ENCODE measurements at regions of chr16 and their contacts with region 1.

Region 1: DNA sequence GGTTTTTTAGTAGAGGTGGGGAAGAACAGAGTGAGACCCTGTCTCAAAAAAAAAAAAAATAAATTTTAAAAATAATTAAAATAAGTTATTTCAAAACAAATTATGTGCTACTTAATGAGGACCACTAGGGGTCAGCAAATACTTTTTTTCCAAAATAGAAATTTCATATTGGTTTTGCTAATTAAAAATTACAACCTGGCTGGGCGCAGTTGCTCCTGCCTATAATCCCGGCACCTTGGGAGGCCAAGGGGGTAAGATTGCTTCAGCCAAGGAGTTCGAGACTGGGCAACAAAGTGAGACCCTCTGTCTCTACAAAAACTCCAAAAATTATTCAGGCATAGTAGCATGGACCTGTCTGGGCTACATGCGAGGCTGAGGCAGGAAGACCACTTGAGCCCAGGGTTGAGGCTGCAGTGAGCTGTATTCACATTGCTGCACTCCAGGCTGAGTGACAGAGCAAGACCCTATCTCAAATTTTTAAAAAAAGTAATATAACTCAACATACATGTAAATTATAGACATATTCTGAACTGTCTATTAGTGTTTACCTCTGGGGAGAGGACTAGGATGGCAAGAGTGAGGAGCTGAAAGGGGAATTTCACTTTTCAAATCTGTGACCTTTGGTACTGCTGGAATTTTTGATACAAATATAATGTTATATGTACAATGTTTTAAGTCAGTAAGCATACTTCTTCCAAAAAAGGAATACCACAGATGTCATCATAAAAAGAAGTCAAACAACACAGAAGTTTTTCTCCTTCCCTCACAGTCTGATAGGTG is 8.1 kb downstream of the MEIOB start:
- DNase-seq: peak in 3 of 42 donors; percentile 3 to 34 (median 26)

Region 2: GRCh38 chr16:1929578-1930337 is 65.9 kb after region 1 on chr16:
- intact Hi-C with region 1: loop called (anchors 2 kb)
- DNase-seq: peak; percentile 59 to 96 (median 90)

Measured in head of caudate nucleus (tissue), 42 donors.